Endothelial cell of umbilical vein (primary cell): ENCODE measurements at regions of chr2 and their contacts with region 1.

Region 1: DNA sequence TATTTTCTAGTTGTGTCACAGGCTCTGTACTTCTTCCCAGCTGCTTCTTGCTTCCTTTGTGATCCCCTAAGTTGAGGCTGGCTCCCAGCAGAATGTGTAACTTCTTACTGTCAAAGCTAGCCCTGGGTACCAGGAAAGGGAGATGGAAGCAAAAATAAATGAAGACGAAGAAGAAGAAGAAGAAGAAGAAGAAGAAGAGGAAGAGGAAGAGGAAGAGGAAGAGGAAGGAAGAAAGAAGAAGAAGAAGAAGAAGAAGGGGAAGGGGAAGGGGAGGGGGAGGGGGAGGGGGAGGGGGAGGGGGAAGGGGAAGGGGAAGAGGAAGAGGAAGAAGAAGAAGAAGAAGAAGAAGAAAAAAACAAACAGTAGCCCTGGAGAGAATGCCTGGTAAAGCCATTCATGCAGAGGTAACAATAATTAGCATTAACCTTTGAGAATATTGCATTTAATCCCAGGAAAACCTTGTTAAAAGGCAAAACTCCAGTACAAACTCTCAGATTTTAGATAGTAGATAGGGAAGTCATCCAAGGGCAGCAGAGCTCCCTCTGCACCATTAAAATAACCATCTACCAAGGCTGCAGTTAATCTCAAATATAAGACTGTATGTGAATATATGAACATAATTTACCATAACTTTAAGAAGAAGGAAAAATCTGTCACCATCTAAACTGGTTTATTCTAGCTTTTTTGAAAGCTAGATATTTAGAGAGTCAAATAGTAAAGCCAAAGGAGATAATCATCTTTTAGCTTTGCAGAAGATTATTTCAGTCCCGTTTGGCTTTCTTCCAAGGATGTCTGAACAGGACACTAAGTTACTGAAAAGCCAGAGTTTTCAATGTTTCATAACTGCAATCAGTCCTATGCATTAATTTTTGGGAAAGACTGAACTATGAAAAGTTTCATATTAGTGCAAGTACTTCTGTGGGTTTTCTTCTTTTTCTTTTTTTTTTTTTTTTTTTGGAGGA is 44.3 kb upstream of the FBXO11 start:
- DNase-seq: no peak
- H3K4me3 ChIP-seq: no peak overlapping the region
- H3K27ac ChIP-seq: no peak overlapping the region
- H3K4me1 ChIP-seq: no peaks in the 10 kb centered on the region
- H3K27me3 ChIP-seq: peaks cover 0 to 2% of the 10 kb centered on the region in 2 experiments
- CTCF ChIP-seq: no peak
- POLR2A ChIP-seq: no peak

Region 2: GRCh38 chr2:48026865-48027264 is 76.2 kb after region 1 on chr2:
- CTCF ChIA-PET with region 1: no interaction called
- POLR2A ChIA-PET with region 1: no interaction called
- dilution Hi-C with region 1: no loop called
- intact Hi-C with region 1: loop called (anchors 10 kb)
- DNase-seq: no peak
- H3K4me3 ChIP-seq: no peak overlapping the region
- H3K27ac ChIP-seq: no peak overlapping the region
- H3K4me1 ChIP-seq: no peaks in the 10 kb centered on the region
- H3K27me3 ChIP-seq: no peaks in the 10 kb centered on the region
- CTCF ChIP-seq: no peak
- POLR2A ChIP-seq: no peak

Region 3: DNA sequence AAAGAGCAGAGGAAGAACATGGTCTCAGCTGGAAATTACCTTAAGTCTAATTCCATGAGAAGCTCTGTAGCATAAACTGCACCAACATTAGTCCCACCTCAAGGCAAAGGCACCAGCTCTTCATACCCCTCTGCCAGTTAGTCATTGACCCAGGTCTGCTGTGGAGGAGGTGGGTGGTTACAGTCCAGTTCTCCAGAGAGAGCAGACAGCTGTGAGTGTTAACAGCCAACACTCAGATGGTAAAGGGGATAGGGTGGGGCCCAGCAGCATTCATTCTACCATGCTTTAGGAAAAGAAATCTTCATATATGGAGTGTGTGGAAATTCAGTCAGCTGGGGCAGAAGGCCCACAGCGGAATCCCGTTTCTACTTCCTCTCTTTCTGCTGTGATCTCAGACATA is 115.4 kb after region 1 on chr2:
- CTCF ChIA-PET with region 1: no interaction called
- POLR2A ChIA-PET with region 1: no interaction called
- dilution Hi-C with region 1: no loop called
- intact Hi-C with region 1: no loop called
- DNase-seq: no peak
- H3K4me3 ChIP-seq: no peak overlapping the region
- H3K27ac ChIP-seq: no peak overlapping the region
- H3K4me1 ChIP-seq: no peaks in the 10 kb centered on the region
- H3K27me3 ChIP-seq: peaks cover 5 to 11% of the 10 kb centered on the region in 2 experiments
- CTCF ChIP-seq: no peak
- POLR2A ChIP-seq: no peak